ENCODE measurements at regions of chr18 and their contacts with region 1.

Region 1: DNA sequence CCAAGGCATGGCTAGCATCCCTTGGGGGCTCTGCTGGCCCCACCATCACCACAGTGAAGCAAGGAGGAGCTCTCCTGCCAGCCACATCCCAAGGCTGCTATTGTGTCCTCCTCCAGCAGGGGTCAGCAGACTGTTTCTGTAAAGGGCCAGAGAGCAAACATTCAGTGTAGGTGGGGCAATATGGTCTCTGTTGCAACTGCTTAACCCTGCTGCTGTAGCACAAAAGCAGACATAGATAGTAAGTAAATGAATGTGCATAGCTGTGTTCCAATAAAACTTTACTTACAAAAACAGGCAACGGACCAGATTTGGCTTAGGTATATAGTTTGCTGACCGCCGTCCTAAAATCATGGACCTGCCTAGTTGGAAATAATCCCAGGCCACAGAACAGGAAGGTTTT is 36.4 kb upstream of the ZBTB7C start:
- DNase-seq: peak; percentile 84
- H3K4me3 Mint-ChIP-seq: no peak overlapping the region
- H3K27ac Mint-ChIP-seq: no peak overlapping the region
- H3K4me1 Mint-ChIP-seq: peaks cover 6% of the 10 kb centered on the region
- H3K27me3 Mint-ChIP-seq: peaks cover 36% of the 10 kb centered on the region

Region 2: GRCh38 chr18:48030616-48031480 is 414.7 kb before region 1 on chr18:
- CTCF ChIA-PET with region 1: interaction called, 5 read pairs
- intact Hi-C with region 1: loop called (anchors 1 kb)
- DNase-seq: peak; percentile 49
- H3K4me3 Mint-ChIP-seq: no peak overlapping the region
- H3K27ac Mint-ChIP-seq: no peak overlapping the region
- H3K4me1 Mint-ChIP-seq: no peaks in the 10 kb centered on the region
- H3K27me3 Mint-ChIP-seq: no peaks in the 10 kb centered on the region

Region 3: GRCh38 chr18:48410095-48410920 is 35.2 kb before region 1 on chr18:
- CTCF ChIA-PET with region 1: interaction called, 7 read pairs
- intact Hi-C with region 1: loop called (anchors 2 kb)
- DNase-seq: peak; percentile 77
- H3K4me3 Mint-ChIP-seq: peak overlapping the region; percentile 54
- H3K27ac Mint-ChIP-seq: no peak overlapping the region
- H3K4me1 Mint-ChIP-seq: peaks cover 10% of the 10 kb centered on the region
- H3K27me3 Mint-ChIP-seq: peaks cover 62% of the 10 kb centered on the region

Region 4: DNA sequence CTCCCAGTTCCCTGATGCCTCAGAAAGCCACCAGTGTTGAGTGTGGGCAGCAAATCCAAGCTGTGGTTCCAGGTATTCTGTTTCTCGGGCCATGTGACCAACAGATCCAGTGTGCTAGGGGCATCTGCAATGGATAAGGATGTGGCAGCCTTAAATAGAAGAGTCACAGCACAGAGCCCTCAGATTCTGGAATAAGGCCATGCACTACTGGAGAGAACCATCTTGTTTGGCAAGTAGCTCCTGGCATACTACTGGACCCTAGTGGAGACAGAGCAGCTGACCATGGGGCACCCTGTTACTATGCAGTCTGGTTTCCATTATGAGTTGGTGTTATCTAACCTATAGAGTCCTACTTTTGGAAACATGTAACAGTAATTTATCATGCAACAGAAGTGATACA is 17.0 kb after region 1 on chr18:
- CTCF ChIA-PET with region 1: interaction called, 27 read pairs
- intact Hi-C with region 1: loop called (anchors 1 kb)
- DNase-seq: no peak
- H3K4me3 Mint-ChIP-seq: no peak overlapping the region
- H3K27ac Mint-ChIP-seq: no peak overlapping the region
- H3K4me1 Mint-ChIP-seq: no peaks in the 10 kb centered on the region
- H3K27me3 Mint-ChIP-seq: peaks cover 36% of the 10 kb centered on the region

Region 5: GRCh38 chr18:48475635-48476549 is 30.4 kb after region 1 on chr18:
- CTCF ChIA-PET with region 1: interaction called, 15 read pairs
- intact Hi-C with region 1: no loop called
- DNase-seq: peak; percentile 34
- H3K4me3 Mint-ChIP-seq: no peak overlapping the region
- H3K27ac Mint-ChIP-seq: no peak overlapping the region
- H3K4me1 Mint-ChIP-seq: no peaks in the 10 kb centered on the region
- H3K27me3 Mint-ChIP-seq: peaks cover 26% of the 10 kb centered on the region

Measured in activated naive CD4-positive, alpha-beta T cell treated with anti-CD3 and anti-CD28 coated beads for 36 hours (primary cell).